ENCODE measurements at regions of chr17 and their contacts with region 1.

Region 1: GRCh38 chr17:50707289-50708049 is at the start of gene ANKRD40:
- DNase-seq: peak; percentile 94
- H3K4me3 Mint-ChIP-seq: peak within 1 kb of the TSS; percentile 95
- H3K27ac Mint-ChIP-seq: peak within 1 kb of the TSS; percentile 92
- H3K4me1 Mint-ChIP-seq: peaks cover 44% of the 10 kb centered on the region
- H3K27me3 Mint-ChIP-seq: no peaks in the 10 kb centered on the region
- total RNA-seq, gene ANKRD40: 25.7 to 26.5 TPM

Region 2: GRCh38 chr17:50560185-50560824 is 147.2 kb before region 1 on chr17 and contains the start of gene CACNA1G:
- CTCF ChIA-PET with region 1: interaction called, 4 read pairs
- intact Hi-C with region 1: loop called (anchors 5 kb)
- DNase-seq: peak; percentile 89
- H3K4me3 Mint-ChIP-seq: peak within 1 kb of the TSS; percentile 66
- H3K27ac Mint-ChIP-seq: no peak within 1 kb of the TSS
- H3K4me1 Mint-ChIP-seq: peaks cover 27% of the 10 kb centered on the region
- H3K27me3 Mint-ChIP-seq: peaks cover 48% of the 10 kb centered on the region
- total RNA-seq, gene CACNA1G: 0.22 to 0.24 TPM

Region 3: GRCh38 chr17:50719144-50719923 is 11.9 kb after region 1 on chr17 and contains the start of gene LUC7L3:
- CTCF ChIA-PET with region 1: interaction called, 3 read pairs
- intact Hi-C with region 1: loop called (anchors 1 kb)
- DNase-seq: peak; percentile 95
- H3K4me3 Mint-ChIP-seq: peak within 1 kb of the TSS; percentile 97
- H3K27ac Mint-ChIP-seq: peak within 1 kb of the TSS; percentile 98
- H3K4me1 Mint-ChIP-seq: peaks cover 25% of the 10 kb centered on the region
- H3K27me3 Mint-ChIP-seq: no peaks in the 10 kb centered on the region
- total RNA-seq, gene LUC7L3: 120 to 136 TPM